Heart left ventricle (tissue), 16 donors: ENCODE measurements at regions of chr15 and their contacts with region 1.

Region 1: GRCh38 chr15:75397494-75397893 is 29.1 kb upstream of the MAN2C1 start:
- DNase-seq: no peak
- ATAC-seq: no peak
- H3K4me3 ChIP-seq: no peak overlapping the region
- H3K27ac ChIP-seq: no peak overlapping the region
- H3K4me1 ChIP-seq: no peaks in the 10 kb centered on the region
- H3K27me3 ChIP-seq: no peaks in the 10 kb centered on the region
- CTCF ChIP-seq: no peak
- POLR2A ChIP-seq: no peak

Region 2: GRCh38 chr15:75597667-75598341 is 200.3 kb after region 1 on chr15:
- intact Hi-C with region 1: loop called in 1 of 10 experiments (anchors 10 kb)
- DNase-seq: no peak
- ATAC-seq: peak in 1 of 4 donors; percentile 19
- H3K4me3 ChIP-seq: no peak overlapping the region
- H3K27ac ChIP-seq: peak overlapping the region in 2 of 12 donors; percentile 5 to 18
- H3K4me1 ChIP-seq: peaks cover 0 to 19% (median 10%) of the 10 kb centered on the region in 12 donors
- H3K27me3 ChIP-seq: no peaks in the 10 kb centered on the region
- CTCF ChIP-seq: peak in 10 of 12 donors; percentile 13 to 47 (median 26)
- POLR2A ChIP-seq: no peak

Region 3: GRCh38 chr15:76038512-76038911 is 641.0 kb after region 1 on chr15:
- intact Hi-C with region 1: no loop called
- DNase-seq: no peak
- ATAC-seq: no peak
- H3K4me3 ChIP-seq: no peak overlapping the region
- H3K27ac ChIP-seq: no peak overlapping the region
- H3K4me1 ChIP-seq: no peaks in the 10 kb centered on the region
- H3K27me3 ChIP-seq: peaks cover 0 to 16% (median 3%) of the 10 kb centered on the region in 9 donors
- CTCF ChIP-seq: no peak
- POLR2A ChIP-seq: no peak